IMR-90 (cell line): ENCODE measurements at regions of chr12 and their contacts with region 1.

Region 1: DNA sequence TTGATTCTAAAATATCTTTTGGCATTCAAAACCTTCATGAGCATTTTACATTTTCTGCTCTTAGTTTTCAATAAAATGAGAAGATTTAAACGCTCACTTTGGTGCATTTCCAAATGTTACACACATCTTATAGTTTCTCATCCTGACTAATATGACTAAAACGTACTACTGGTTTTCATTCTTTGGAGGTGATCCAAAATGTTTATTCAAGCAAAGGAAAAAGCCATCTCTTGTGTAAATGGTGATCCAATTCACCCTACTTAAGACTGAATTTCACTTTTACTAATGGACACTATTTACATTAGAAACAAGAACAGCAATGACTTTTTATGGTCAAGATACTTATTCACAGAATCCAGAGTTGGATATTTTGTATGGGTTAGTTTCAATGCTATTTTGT is 86.6 kb downstream of the KITLG start:
- DNase-seq: peak; percentile 97
- ATAC-seq: peak; percentile 73
- H3K4me3 ChIP-seq: peak overlapping the region; percentile 21; the same call in 1 of the 2 replicates
- H3K27ac ChIP-seq: peak overlapping the region; percentile 7; the same call in 1 of the 2 replicates
- H3K4me1 ChIP-seq: peaks cover 4% of the 10 kb centered on the region; the same call in 1 of the 2 replicates
- H3K27me3 ChIP-seq: no peaks in the 10 kb centered on the region
- CTCF ChIP-seq: no peak
- POLR2A ChIP-seq: no peak
- RAD21 ChIP-seq: 0 out of 2 replicates have a peak, but pooled peaks have one; percentile 9

Region 2: DNA sequence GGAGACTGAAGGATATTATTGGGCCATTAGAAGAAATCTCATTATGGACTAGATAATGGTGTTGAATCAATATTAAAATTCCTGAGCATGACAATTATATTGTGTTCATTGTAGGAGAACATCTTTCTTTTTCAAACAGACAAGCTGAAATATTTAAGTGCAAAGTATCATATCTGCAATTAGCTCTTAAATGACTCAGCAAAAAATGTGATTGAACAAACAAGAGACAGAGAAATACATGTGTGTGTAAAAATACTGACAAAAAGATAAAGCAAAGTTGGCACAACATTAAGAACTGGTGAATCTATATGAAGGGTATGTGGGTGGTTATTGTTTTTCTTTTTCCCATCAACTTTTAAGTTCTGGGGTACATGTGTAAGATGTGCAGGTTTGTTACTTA is 361.2 kb before region 1 on chr12:
- CTCF ChIA-PET with region 1: no interaction called
- POLR2A ChIA-PET with region 1: no interaction called
- dilution Hi-C with region 1: no loop called
- in situ Hi-C with region 1: no loop called
- intact Hi-C with region 1: no loop called
- DNase-seq: no peak
- ATAC-seq: no peak
- H3K4me3 ChIP-seq: no peak overlapping the region
- H3K27ac ChIP-seq: no peak overlapping the region
- H3K4me1 ChIP-seq: no peaks in the 10 kb centered on the region
- H3K27me3 ChIP-seq: no peaks in the 10 kb centered on the region
- CTCF ChIP-seq: no peak
- POLR2A ChIP-seq: no peak
- RAD21 ChIP-seq: no peak

Region 3: DNA sequence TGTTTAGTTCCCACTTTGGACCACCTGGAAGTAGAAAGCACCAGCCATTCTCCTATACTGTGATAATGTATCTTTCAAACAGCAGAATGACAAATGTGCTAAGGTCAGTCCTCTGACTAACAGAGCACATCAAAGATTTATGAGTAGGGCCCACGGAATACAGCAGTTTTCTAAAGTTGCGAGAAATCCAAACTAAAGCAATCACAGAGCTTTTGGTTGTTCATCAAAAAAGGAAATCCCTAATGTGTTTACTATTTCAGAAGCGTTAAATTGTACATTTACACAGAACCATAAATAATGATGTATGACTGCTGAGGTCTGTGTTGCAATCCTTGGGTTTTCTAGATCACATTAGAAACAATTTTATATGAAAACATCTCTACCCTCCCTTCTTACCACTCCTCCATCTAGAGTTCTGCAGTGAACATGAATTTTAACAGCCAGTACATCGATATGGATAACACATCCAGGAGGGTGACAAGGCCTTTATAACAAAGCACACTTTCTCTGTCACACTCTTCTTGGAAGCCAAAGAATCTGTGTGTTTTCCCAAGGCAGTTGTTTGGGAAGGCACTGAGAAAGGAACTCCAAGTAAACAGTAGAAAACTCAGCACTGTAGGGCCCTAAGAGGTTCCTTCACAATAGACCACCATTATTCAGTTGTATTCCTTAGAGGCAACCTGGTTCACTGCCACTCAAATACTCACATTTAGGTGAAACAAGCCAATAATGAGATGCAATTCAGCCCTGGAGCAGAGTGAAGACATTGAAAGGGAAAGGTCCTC is 79.3 kb after region 1 on chr12:
- CTCF ChIA-PET with region 1: no interaction called
- POLR2A ChIA-PET with region 1: no interaction called
- dilution Hi-C with region 1: no loop called
- in situ Hi-C with region 1: no loop called
- intact Hi-C with region 1: loop called (anchors 2 kb)
- DNase-seq: no peak
- ATAC-seq: no peak
- H3K4me3 ChIP-seq: no peak overlapping the region
- H3K27ac ChIP-seq: peak overlapping the region; percentile 40; the same call in 1 of the 2 replicates
- H3K4me1 ChIP-seq: peaks cover 15% of the 10 kb centered on the region
- H3K27me3 ChIP-seq: no peaks in the 10 kb centered on the region
- CTCF ChIP-seq: no peak
- POLR2A ChIP-seq: no peak
- RAD21 ChIP-seq: no peak

Region 4: DNA sequence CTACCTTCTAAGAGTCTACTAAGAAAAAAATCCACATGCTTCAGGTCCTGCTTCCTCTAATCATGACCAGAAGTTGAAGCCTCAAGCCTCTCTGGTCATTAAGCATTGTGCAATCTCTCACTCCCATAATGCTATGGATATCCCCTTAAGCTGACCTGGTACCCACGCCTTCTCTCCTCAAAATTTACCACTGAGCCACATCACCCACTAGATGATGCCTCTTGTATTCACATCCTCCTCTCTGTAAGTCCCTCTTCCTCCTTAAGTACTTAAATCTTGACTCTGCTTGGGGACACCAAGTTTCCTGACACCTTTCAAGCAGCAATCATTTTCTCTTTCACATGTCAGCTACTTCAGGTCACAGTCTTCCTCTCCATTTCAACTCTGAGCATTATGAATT is 1021.1 kb after region 1 on chr12:
- CTCF ChIA-PET with region 1: no interaction called
- POLR2A ChIA-PET with region 1: no interaction called
- dilution Hi-C with region 1: no loop called
- in situ Hi-C with region 1: no loop called
- intact Hi-C with region 1: no loop called
- DNase-seq: no peak
- ATAC-seq: no peak
- H3K4me3 ChIP-seq: no peak overlapping the region
- H3K27ac ChIP-seq: no peak overlapping the region
- H3K4me1 ChIP-seq: no peaks in the 10 kb centered on the region
- H3K27me3 ChIP-seq: no peaks in the 10 kb centered on the region
- CTCF ChIP-seq: no peak
- POLR2A ChIP-seq: no peak
- RAD21 ChIP-seq: no peak